Activated naive CD4-positive, alpha-beta T cell treated with anti-CD3 and anti-CD28 coated beads, Interleukin-2, amount 10 ng/mL, durations not matched to agents 7 days and 5 days (primary cell): ENCODE measurements at regions of chr22 and their contacts with region 1.

Region 1: GRCh38 chr22:17742527-17742902 is 31.8 kb downstream of the BID start:
- DNase-seq: peak; percentile 75
- H3K4me3 Mint-ChIP-seq: no peak overlapping the region
- H3K27ac Mint-ChIP-seq: no peak overlapping the region
- H3K4me1 Mint-ChIP-seq: peaks cover 12% of the 10 kb centered on the region
- H3K27me3 Mint-ChIP-seq: no peaks in the 10 kb centered on the region

Region 2: DNA sequence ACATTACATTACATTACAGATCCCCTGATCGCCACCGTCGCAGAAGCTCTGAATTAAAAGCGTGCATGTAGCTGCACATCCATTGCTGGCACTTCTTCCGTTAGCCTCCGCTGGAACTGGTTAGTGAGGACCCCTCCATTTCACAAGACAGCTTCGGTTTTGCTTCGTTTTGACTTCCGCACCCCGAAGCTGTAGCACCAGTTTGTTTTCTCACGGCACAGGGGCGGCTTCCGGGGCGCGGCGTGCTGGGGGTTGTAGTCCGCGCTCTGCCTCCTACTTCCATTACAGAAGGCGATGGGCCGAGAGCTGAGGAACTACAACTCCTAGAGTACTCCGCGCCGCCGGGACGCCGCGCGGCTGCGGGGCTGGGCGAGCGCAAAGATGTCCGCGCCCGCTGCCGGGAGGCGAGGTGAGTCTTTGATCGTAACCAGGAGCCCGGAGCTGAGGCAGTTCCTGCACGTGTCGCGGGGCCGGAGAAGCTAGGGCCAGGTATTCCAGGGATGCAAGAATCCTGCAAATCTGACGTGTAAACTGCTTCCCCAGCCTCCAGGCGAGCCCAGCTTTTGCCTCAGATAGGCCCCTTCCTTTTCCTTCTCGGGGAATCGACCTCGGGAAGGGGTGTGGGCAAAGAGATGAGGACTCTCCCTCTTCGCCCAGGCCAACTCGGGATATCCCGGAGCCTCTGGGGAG is 335.3 kb after region 1 on chr22 and contains the start of gene PEX26:
- CTCF ChIA-PET with region 1: interaction called, 17 read pairs
- DNase-seq: peak; percentile 98
- H3K4me3 Mint-ChIP-seq: peak within 1 kb of the TSS; percentile 84
- H3K27ac Mint-ChIP-seq: peak within 1 kb of the TSS; percentile 92
- H3K4me1 Mint-ChIP-seq: peaks cover 55% of the 10 kb centered on the region
- H3K27me3 Mint-ChIP-seq: no peaks in the 10 kb centered on the region